ENCODE measurements at regions of chr3 and their contacts with region 1.

Region 1: DNA sequence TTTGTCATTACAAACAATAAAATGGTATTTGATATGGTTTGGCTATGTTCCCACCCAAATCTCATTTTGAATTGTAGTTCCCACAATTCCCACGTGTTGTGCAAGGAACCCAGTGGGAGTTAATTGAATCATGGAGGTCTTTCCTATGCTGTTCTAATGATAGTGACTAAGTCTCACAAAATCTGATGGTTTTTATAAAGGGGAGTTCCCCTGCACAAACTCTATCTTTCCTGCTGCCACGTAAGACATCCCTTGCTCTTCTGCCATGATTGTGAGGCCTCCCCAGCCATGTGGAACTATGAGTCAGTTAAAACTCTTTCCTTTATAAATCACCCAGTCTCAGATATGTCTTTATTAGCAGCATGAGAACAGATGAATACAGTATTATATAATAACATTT is 15.4 kb upstream of the AADAC start:
- DNase-seq: no peak
- H3K4me3 ChIP-seq: no peak overlapping the region
- H3K4me3 Mint-ChIP-seq: no peak overlapping the region
- H3K27ac Mint-ChIP-seq: no peak overlapping the region
- H3K4me1 ChIP-seq: no peaks in the 10 kb centered on the region
- H3K4me1 Mint-ChIP-seq: no peaks in the 10 kb centered on the region
- H3K27me3 ChIP-seq: no peaks in the 10 kb centered on the region
- H3K27me3 Mint-ChIP-seq: no peaks in the 10 kb centered on the region
- CTCF ChIP-seq: no peak

Region 2: GRCh38 chr3:151787626-151788025 is 10.8 kb before region 1 on chr3:
- CTCF ChIA-PET with region 1: no interaction called
- POLR2A ChIA-PET with region 1: no interaction called
- intact Hi-C with region 1: no loop called
- DNase-seq: no peak
- H3K4me3 ChIP-seq: no peak overlapping the region
- H3K4me3 Mint-ChIP-seq: no peak overlapping the region
- H3K27ac Mint-ChIP-seq: no peak overlapping the region
- H3K4me1 ChIP-seq: peaks cover 41% of the 10 kb centered on the region
- H3K4me1 Mint-ChIP-seq: peaks cover 16% of the 10 kb centered on the region
- H3K27me3 ChIP-seq: no peaks in the 10 kb centered on the region
- H3K27me3 Mint-ChIP-seq: no peaks in the 10 kb centered on the region
- CTCF ChIP-seq: no peak

Region 3: GRCh38 chr3:151866711-151867410 is 68.4 kb after region 1 on chr3:
- CTCF ChIA-PET with region 1: no interaction called
- POLR2A ChIA-PET with region 1: interaction called, 12 read pairs
- intact Hi-C with region 1: no loop called
- DNase-seq: no peak
- H3K4me3 ChIP-seq: no peak overlapping the region
- H3K4me3 Mint-ChIP-seq: no peak overlapping the region
- H3K27ac Mint-ChIP-seq: no peak overlapping the region
- H3K4me1 ChIP-seq: peaks cover 10% of the 10 kb centered on the region
- H3K4me1 Mint-ChIP-seq: peaks cover 10% of the 10 kb centered on the region
- H3K27me3 ChIP-seq: no peaks in the 10 kb centered on the region
- H3K27me3 Mint-ChIP-seq: no peaks in the 10 kb centered on the region
- CTCF ChIP-seq: no peak

Measured in Caco-2 (cell line).